HEK293 (cell line): ENCODE measurements at regions of chr12 and their contacts with region 1.

Region 1: GRCh38 chr12:65300680-65301349 is 22.3 kb downstream of the MSRB3 start:
- H3K4me3 ChIP-seq: no peak overlapping the region
- H3K27ac ChIP-seq: no peak overlapping the region
- H3K4me1 ChIP-seq: peaks cover 12% of the 10 kb centered on the region
- CTCF ChIP-seq: peak; percentile 42; the same call in 1 of the 2 replicates

Region 2: GRCh38 chr12:64192644-64193444 is 1108.0 kb before region 1 on chr12:
- CTCF ChIA-PET with region 1: no interaction called
- POLR2A ChIA-PET with region 1: no interaction called
- H3K4me3 ChIP-seq: no peak overlapping the region
- H3K27ac ChIP-seq: no peak overlapping the region
- H3K4me1 ChIP-seq: no peaks in the 10 kb centered on the region
- CTCF ChIP-seq: no peak

Region 3: DNA sequence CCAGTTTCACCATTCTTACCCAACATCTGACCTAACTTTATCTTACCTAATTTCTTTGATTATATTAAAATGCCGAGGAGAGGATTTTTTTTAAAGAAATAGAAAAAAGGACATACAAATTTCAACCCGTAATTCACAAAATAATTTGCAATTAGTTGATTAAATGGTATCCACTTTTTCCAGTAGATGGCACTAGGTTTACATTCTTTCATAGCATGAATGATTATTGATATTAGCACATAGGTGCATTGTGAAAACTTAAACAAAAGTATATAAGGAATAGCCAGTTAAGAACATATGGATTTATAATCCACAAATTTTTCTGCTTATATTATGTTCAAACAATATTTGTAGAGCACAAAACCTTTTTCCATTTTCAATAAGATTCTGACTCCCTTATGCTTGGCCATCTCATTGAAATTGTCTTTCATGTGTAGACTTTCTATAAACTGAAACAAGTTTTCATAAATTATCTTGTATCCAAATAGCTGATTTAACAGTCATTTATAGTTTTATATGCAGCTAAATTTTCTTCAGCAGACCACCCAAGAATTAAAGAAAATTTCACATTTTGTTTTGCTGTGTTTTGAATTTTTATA is 13.0 kb after region 1 on chr12:
- CTCF ChIA-PET with region 1: interaction called, 28 read pairs
- POLR2A ChIA-PET with region 1: no interaction called
- H3K4me3 ChIP-seq: no peak overlapping the region
- H3K27ac ChIP-seq: no peak overlapping the region
- H3K4me1 ChIP-seq: no peaks in the 10 kb centered on the region
- CTCF ChIP-seq: peak; percentile 45; the same call in 1 of the 2 replicates

Region 4: GRCh38 chr12:65327207-65328076 is 26.6 kb after region 1 on chr12:
- CTCF ChIA-PET with region 1: no interaction called
- POLR2A ChIA-PET with region 1: no interaction called
- H3K4me3 ChIP-seq: no peak overlapping the region
- H3K27ac ChIP-seq: no peak overlapping the region
- H3K4me1 ChIP-seq: peaks cover 18% of the 10 kb centered on the region
- CTCF ChIP-seq: no peak